RWPE1 (cell line): ENCODE measurements at regions of chr1 and their contacts with region 1.

Region 1: DNA sequence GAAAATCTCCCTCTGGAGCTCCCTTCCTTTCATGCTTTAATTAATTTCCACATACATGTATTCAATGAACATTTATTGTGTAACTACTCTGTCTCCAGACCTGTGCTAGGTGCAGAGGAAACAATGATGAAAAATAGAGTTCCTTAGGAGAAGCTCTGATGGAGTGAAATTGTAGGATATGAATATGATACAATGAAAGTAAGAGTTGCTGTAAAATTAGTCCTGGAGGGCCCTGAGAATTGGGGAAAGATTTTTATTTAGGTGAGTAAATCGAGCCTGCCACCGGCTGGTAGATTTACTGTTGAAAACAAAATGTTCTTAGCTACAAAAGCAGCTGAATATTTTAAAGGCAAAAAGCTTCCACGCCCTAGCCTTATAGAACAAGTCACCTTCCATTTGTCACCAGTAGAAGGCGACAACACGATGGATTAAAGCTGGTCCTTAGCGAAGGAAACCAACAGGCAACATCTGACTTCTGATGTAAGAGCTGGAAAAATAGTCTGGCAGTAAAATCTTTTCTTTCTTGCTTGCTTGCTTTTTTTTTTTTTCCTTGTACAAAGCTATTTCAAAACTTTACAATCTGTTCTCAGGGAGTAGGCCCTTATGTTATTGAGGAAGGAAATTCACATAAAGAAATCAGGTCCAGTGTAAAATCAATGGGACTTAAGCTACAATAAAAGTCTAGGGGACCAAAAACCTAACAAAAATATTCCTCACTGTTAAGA is 82.0 kb upstream of the ROR1 start:
- DNase-seq: peak; percentile 70
- H3K27ac ChIP-seq: no peak overlapping the region
- CTCF ChIP-seq: peak; percentile 78

Region 2: DNA sequence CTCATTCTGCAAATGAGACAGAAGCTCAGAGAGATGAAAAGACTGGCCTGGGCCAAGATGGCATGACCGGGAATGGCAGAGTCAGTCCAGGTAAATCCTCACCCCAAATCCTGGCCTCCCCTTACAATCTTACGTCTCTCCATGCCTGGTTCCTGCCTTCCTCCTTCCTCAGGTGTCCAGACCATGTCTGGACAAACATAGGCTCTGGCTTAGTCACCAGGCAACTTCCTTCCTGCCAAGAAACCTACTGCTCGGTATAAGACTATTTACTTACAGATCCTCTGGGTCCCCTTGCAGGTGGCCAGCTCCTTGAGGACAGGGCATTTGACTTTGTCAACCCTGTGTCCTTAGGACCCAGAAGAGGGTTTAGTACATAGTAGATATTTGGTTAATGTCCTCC is 12.6 kb after region 1 on chr1:
- CTCF ChIA-PET with region 1: interaction called, 14 read pairs
- POLR2A ChIA-PET with region 1: no interaction called
- DNase-seq: peak; percentile 22
- H3K27ac ChIP-seq: no peak overlapping the region
- CTCF ChIP-seq: no peak

Region 3: DNA sequence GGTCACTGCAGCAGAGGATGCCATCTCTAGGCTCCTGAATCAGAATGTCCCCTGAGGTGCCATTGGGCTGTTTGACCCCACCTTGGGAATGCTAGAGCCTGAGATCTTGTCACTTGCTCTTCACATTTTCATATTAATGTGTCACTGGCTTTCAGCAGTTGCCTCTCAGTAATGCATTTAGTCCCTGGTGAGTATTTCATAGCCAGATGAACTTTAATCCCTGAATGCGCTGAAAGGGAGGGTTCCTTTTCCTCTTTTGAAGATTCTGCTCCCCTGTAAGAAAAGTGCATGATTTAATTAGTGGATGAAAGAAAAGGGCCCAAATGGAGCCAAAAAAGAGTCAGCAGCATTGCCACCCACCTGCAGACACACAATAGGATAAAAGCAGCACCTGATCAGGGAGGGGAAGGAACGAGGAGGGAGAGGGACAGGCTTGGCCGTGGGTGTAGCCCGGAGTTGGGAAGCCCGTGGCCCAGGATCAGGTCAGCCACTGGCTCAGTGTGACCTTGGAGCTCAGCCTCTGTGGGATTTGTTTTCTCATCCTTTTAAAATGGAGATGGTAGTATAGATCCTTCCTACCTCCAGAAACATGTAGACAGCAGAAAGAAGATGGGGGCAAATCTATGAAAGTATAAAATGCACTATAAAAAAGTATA is 113.1 kb after region 1 on chr1:
- CTCF ChIA-PET with region 1: no interaction called
- POLR2A ChIA-PET with region 1: no interaction called
- DNase-seq: no peak
- H3K27ac ChIP-seq: no peak overlapping the region
- CTCF ChIP-seq: no peak

Region 4: DNA sequence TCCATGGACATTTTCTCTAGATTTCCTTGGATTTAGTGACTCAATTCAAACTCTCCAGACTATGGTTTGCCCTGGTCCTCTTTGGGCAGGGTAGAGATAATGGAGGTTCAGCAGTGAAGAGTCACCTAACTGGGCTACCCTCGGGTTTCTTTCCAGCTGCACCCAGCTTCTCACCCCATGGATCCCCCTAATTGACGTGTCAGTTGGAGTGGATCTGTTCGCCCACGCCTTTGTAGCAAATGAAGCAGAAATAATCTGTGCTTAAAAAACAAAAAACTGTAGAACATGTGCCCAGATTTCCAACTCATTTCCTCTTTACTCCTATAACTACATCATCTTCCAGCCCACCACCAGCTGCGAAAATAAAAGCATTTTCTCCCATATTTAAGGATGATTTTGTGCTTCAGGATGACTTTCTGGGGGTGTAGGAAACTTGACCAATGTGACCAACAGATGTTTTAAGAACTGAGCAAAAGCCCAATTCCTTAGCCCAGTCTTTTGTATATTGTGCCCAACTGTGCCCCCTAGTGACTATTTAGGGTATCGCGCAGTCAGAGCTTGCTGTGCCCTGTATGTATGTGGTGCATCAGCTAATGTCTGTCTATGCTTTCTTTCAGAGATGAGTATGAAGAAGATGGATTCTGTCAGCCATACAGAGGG is 445.0 kb after region 1 on chr1:
- CTCF ChIA-PET with region 1: interaction called, 22 read pairs
- POLR2A ChIA-PET with region 1: no interaction called
- DNase-seq: peak; percentile 62
- H3K27ac ChIP-seq: peak overlapping the region; percentile 33; the same call in 1 of the 2 replicates
- CTCF ChIP-seq: peak; percentile 91

Region 5: GRCh38 chr1:64246294-64246917 is 554.5 kb after region 1 on chr1:
- CTCF ChIA-PET with region 1: interaction called, 12 read pairs
- POLR2A ChIA-PET with region 1: no interaction called
- DNase-seq: peak; percentile 57
- H3K27ac ChIP-seq: no peak overlapping the region
- CTCF ChIP-seq: peak; percentile 80